Panc1 (cell line): ENCODE measurements at regions of chr18 and their contacts with region 1.

Region 1: DNA sequence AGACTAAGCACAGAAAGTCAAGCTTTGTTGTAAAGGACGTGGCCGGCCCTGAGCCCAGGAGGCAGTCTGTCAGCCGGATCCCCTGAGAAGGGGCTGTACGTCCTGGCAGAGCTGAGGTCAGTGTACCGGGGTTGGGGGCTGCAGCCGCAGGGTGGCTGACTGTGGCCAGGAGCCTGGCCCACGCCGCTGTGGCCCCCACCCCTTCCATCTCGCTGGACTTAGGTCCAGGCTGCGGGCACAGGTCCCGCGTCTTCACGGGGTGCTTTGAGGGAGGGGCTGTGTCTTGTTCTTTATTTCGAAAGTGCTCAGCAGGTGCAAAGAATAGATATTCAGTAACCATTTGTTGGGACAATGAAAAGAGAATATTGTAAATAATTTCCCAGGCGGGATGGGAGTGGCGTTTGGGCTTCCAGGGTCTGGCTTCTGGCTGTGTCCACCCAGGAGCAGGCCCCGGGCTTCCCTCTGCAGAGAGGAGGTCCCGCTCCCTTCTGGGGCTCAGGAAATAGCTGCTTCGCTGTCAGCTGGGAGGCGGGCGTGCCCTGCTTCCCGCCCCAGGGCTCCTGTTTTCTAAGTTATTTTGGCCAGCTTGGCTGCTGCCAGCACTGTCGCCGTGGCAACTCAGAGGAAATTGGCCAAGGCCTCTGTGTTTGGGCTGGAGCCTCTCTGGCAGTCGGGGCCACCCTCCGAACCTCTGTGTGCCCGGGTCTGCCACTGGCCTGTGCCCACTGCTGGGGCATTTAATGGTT is 7.4 kb downstream of the NFATC1 start:
- DNase-seq: no peak
- ATAC-seq: no peak
- H3K4me3 ChIP-seq: no peak overlapping the region
- H3K27ac ChIP-seq: no peak overlapping the region
- H3K4me1 ChIP-seq: peaks cover 40% of the 10 kb centered on the region
- H3K27me3 ChIP-seq: no peaks in the 10 kb centered on the region
- CTCF ChIP-seq: no peak

Region 2: GRCh38 chr18:79092874-79093273 is 310.3 kb before region 1 on chr18:
- CTCF ChIA-PET with region 1: no interaction called
- POLR2A ChIA-PET with region 1: no interaction called
- in situ Hi-C with region 1: no loop called
- intact Hi-C with region 1: no loop called
- DNase-seq: no peak
- ATAC-seq: no peak
- H3K4me3 ChIP-seq: no peak overlapping the region
- H3K27ac ChIP-seq: no peak overlapping the region
- H3K4me1 ChIP-seq: no peaks in the 10 kb centered on the region
- H3K27me3 ChIP-seq: no peaks in the 10 kb centered on the region
- CTCF ChIP-seq: no peak

Region 3: GRCh38 chr18:79427368-79428225 is 24.4 kb after region 1 on chr18:
- CTCF ChIA-PET with region 1: no interaction called
- POLR2A ChIA-PET with region 1: interaction called, 26 read pairs
- in situ Hi-C with region 1: no loop called
- intact Hi-C with region 1: no loop called
- DNase-seq: no peak
- ATAC-seq: no peak
- H3K4me3 ChIP-seq: no peak overlapping the region
- H3K27ac ChIP-seq: no peak overlapping the region
- H3K4me1 ChIP-seq: no peaks in the 10 kb centered on the region
- H3K27me3 ChIP-seq: no peaks in the 10 kb centered on the region
- CTCF ChIP-seq: no peak

Region 4: DNA sequence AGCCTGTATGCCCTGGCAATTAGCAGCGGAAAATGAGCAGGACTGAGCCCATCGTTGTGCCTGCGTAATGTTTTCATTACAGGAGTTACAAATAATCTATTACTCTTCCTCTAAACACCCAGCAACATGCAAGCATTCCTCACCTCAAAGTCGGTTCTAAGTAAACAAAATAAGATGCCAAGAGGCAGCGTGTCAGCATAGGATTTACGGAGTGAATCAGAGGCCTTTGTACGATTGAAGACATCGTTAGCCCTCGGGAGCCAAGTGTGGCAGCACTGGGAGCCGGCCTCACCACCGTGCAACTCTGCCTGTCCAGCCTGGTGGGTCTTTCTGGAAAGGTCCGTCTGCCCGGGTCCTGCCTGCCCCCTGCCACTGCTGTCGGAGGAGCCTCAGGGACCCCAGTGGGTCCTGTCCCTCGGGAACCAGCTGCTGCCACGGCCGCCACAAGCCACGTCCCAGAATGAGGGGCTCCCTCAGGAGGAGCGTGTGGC is 196.3 kb after region 1 on chr18:
- CTCF ChIA-PET with region 1: no interaction called
- POLR2A ChIA-PET with region 1: no interaction called
- in situ Hi-C with region 1: no loop called
- intact Hi-C with region 1: no loop called
- DNase-seq: peak; percentile 64
- ATAC-seq: peak; percentile 91
- H3K4me3 ChIP-seq: peak overlapping the region in 1 of 2 experiments; percentile 7; a peak in 1 of 4 replicates
- H3K27ac ChIP-seq: no peak overlapping the region
- H3K4me1 ChIP-seq: peaks cover 19% of the 10 kb centered on the region
- H3K27me3 ChIP-seq: peaks cover 22% of the 10 kb centered on the region
- CTCF ChIP-seq: no peak